HepG2 (cell line): ENCODE measurements at regions of chr22 and their contacts with region 1.

Region 1: DNA sequence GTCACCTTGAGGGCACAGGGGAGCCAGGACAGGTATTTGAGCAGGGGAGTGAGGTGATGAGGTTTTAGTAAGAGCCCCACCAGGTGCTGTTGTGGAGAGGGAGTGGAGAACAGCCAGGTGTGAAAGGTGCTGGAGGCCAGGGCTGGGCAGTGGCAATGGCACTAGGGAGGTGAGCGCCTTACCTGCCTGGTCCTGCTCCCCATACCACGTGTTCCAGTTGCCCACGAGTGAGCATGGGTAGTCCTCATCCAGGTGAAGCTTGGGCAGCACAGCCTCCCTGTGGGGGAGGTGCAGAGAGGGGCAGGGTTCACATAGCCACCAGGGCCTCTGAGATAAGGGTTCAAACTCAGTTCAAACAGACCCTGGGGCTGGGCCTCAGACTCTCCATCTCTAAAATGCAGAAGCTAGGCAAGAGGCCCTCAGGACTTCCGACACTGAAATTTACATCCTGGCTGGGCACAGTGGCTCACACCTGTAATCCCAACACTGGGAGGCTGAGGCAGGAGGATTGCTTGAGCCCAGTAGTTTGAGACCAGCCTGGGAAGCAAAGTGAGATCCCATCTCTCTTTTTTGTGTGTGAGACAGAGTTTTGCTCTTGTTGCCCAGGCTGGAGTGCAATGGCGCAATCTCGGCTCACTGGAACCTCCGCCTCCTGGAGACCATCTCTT is 11.8 kb downstream of the NIPSNAP1 start:
- DNase-seq: peak; percentile 65
- ATAC-seq: peak; percentile 69
- H3K4me3 ChIP-seq: no peak overlapping the region
- H3K27ac ChIP-seq: peak overlapping the region; percentile 62
- H3K4me1 ChIP-seq: peaks cover 57% of the 10 kb centered on the region
- H3K27me3 ChIP-seq: no peaks in the 10 kb centered on the region
- CTCF ChIP-seq: 0 out of 2 replicates have a peak, but pooled peaks have one; percentile 14
- EP300 ChIP-seq: peak in 1 of 2 experiments; percentile 58; a peak in 1 of 4 replicates
- POLR2A ChIP-seq: no peak
- RAD21 ChIP-seq: no peak

Region 2: DNA sequence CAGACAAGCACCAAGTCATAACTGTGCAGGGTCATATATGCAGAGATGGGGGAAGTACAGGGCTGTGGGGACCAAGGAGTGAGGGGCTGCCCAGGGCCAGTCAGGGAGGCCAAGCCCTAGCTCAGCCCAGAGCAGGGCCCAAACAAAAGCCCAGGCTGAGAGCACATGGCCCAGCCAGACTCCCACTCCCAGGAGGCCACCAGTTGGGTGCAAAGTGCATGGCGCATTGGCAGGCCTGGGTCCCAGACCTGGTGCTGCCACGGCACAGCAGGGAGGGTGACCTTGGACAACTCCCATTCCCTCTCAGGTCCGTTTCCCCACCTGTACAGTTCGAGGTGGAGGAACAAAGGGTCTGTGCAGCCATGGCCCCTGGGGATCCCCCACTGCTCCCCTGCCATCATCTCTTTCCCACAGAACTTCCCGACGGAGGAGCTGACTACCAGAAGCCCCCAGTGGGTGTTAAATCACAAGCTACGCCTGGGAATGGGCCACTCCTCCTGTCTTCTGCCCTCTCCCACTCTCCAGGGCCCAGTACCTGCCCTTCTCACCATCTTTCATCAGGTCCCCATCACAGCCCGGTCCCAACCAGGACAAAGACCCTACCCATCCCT is 11.2 kb after region 1 on chr22:
- CTCF ChIA-PET with region 1: no interaction called
- POLR2A ChIA-PET with region 1: interaction called, 70 read pairs
- in situ Hi-C with region 1: no loop called
- intact Hi-C with region 1: no loop called
- DNase-seq: peak; percentile 92
- ATAC-seq: peak; percentile 92
- H3K4me3 ChIP-seq: peak overlapping the region; percentile 65 to 98 (median 83)
- H3K27ac ChIP-seq: peak overlapping the region; percentile 99
- H3K4me1 ChIP-seq: peaks cover 82% of the 10 kb centered on the region
- H3K27me3 ChIP-seq: no peaks in the 10 kb centered on the region; a peak in 1 of 5 replicates
- CTCF ChIP-seq: peak; percentile 35
- EP300 ChIP-seq: peak in 1 of 2 experiments; percentile 35; a peak in 2 of 4 replicates
- POLR2A ChIP-seq: peak; percentile 96 to 99
- RAD21 ChIP-seq: peak; percentile 72

Region 3: DNA sequence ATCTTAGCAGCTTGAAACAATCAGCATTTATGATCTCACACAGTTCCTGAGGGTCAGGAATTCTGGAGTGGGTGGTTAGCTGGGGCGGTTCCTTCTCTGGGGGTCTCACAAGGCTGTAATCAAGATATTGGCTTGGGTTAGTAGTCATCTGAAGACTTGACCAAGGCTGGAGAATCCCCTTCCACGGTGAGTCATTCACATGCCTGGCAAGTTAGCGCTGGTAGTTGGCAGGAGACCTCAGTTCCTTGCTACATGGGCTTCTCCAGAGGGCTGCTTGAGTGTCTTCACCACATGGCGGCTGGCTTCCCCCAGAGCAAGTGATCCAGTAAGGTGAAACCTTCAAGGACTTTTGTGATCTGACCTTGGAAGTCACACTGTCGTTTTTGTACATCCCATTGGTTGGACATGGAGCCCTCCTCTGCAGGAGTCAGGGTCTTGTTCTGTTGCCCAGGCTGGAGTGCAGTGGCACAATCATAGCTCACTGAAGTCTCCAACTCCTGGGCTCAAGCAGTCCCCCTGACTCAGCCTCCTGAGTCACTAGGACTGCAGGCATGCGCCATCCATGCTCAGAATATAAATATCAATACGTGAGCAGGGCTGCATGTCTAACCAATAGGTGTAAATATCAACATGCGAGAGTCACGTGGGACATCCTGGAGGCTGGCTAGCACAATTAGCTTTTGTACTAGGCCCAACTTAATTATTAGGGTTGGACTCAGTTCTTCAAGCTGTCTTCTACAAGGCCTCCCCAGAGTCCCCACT is 19.0 kb after region 1 on chr22:
- CTCF ChIA-PET with region 1: no interaction called
- POLR2A ChIA-PET with region 1: interaction called, 16 read pairs
- in situ Hi-C with region 1: no loop called
- intact Hi-C with region 1: no loop called
- DNase-seq: peak; percentile 41
- ATAC-seq: peak; percentile 73
- H3K4me3 ChIP-seq: peak overlapping the region; percentile 8 to 40 (median 31); a peak in 5 of 6 replicates
- H3K27ac ChIP-seq: peak overlapping the region; percentile 10
- H3K4me1 ChIP-seq: peaks cover 46% of the 10 kb centered on the region
- H3K27me3 ChIP-seq: no peaks in the 10 kb centered on the region; a peak in 1 of 5 replicates
- CTCF ChIP-seq: no peak
- EP300 ChIP-seq: no peak
- POLR2A ChIP-seq: no peak
- RAD21 ChIP-seq: no peak